B cell (primary cell): ENCODE measurements at regions of chr13 and their contacts with region 1.

Region 1: GRCh38 chr13:41132512-41133152 is at the start of gene KBTBD6:
- DNase-seq: peak; percentile 94
- ATAC-seq: peak; percentile 97
- H3K4me3 ChIP-seq: peak within 1 kb of the TSS; percentile 68 to 99 (median 84)
- H3K4me3 Mint-ChIP-seq: peak within 1 kb of the TSS; percentile 99
- H3K27ac ChIP-seq: peak within 1 kb of the TSS; percentile 45 to 79
- H3K27ac Mint-ChIP-seq: peak within 1 kb of the TSS; percentile 95
- H3K4me1 ChIP-seq: peaks cover 24% of the 10 kb centered on the region in 2 donors
- H3K4me1 Mint-ChIP-seq: peaks cover 43% of the 10 kb centered on the region
- H3K27me3 ChIP-seq: no peaks in the 10 kb centered on the region
- H3K27me3 Mint-ChIP-seq: no peaks in the 10 kb centered on the region
- CTCF ChIP-seq: no peak
- total RNA-seq, gene KBTBD6: 8.5 and 8.8 TPM in 2 replicates

Region 2: GRCh38 chr13:40770934-40771618 is 361.6 kb before region 1 on chr13 and contains the start of gene MRPS31:
- CTCF ChIA-PET with region 1: no interaction called
- POLR2A ChIA-PET with region 1: no interaction called
- intact Hi-C with region 1: loop called (anchors 5 kb)
- DNase-seq: peak; percentile 95
- ATAC-seq: peak; percentile 100
- H3K4me3 ChIP-seq: peak within 1 kb of the TSS; percentile 65 to 99 (median 99)
- H3K4me3 Mint-ChIP-seq: peak within 1 kb of the TSS; percentile 100
- H3K27ac ChIP-seq: peak within 1 kb of the TSS; percentile 64 to 88
- H3K27ac Mint-ChIP-seq: peak within 1 kb of the TSS; percentile 97
- H3K4me1 ChIP-seq: peaks cover 12 to 19% of the 10 kb centered on the region in 2 donors
- H3K4me1 Mint-ChIP-seq: peaks cover 21% of the 10 kb centered on the region
- H3K27me3 ChIP-seq: no peaks in the 10 kb centered on the region
- H3K27me3 Mint-ChIP-seq: no peaks in the 10 kb centered on the region
- CTCF ChIP-seq: no peak
- total RNA-seq, gene MRPS31: 29.7 and 34.4 TPM in 2 replicates

Region 3: GRCh38 chr13:41019011-41019487 is 113.6 kb before region 1 on chr13 and contains the start of gene ELF1:
- CTCF ChIA-PET with region 1: no interaction called
- POLR2A ChIA-PET with region 1: no interaction called
- intact Hi-C with region 1: loop called (anchors 2 kb)
- DNase-seq: peak; percentile 91
- ATAC-seq: peak; percentile 89
- H3K4me3 ChIP-seq: peak within 1 kb of the TSS; percentile 65 to 99 (median 75)
- H3K4me3 Mint-ChIP-seq: peak within 1 kb of the TSS; percentile 94
- H3K27ac ChIP-seq: peak within 1 kb of the TSS; percentile 96 to 100
- H3K27ac Mint-ChIP-seq: peak within 1 kb of the TSS; percentile 98
- H3K4me1 ChIP-seq: peaks cover 29 to 33% of the 10 kb centered on the region in 2 donors
- H3K4me1 Mint-ChIP-seq: peaks cover 52% of the 10 kb centered on the region
- H3K27me3 ChIP-seq: no peaks in the 10 kb centered on the region
- H3K27me3 Mint-ChIP-seq: no peaks in the 10 kb centered on the region
- CTCF ChIP-seq: no peak
- total RNA-seq, gene ELF1: 185 and 186 TPM in 2 replicates

Region 4: DNA sequence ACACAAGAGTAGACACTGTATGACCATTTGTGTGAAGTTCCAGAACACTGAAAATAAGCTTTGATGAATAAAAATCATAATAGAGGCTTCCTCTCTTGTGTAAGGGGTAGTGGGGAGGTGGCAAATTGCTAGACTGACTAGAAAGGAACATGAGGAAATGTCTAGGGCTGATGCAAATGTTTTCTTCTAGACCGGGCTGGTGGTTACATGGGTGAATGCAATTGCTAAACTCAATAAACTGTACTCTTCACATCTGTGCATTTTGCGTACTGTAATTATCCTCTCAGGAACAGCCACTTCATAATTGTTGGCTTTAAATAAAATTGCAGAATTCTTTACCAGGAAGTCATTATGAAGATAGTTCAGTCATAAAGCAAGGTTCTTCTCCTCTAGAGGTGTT is 66.9 kb after region 1 on chr13:
- CTCF ChIA-PET with region 1: interaction called, 3 read pairs
- POLR2A ChIA-PET with region 1: interaction called, 9 read pairs
- intact Hi-C with region 1: loop called (anchors 1 kb)
- DNase-seq: peak; percentile 88
- ATAC-seq: peak; percentile 89
- H3K4me3 ChIP-seq: peak overlapping the region in 2 of 5 experiments; percentile 5 to 47
- H3K4me3 Mint-ChIP-seq: peak overlapping the region; percentile 51
- H3K27ac ChIP-seq: peak overlapping the region; percentile 71 to 100
- H3K27ac Mint-ChIP-seq: peak overlapping the region; percentile 98
- H3K4me1 ChIP-seq: peaks cover 35% of the 10 kb centered on the region in 2 donors
- H3K4me1 Mint-ChIP-seq: peaks cover 42% of the 10 kb centered on the region
- H3K27me3 ChIP-seq: no peaks in the 10 kb centered on the region
- H3K27me3 Mint-ChIP-seq: no peaks in the 10 kb centered on the region
- CTCF ChIP-seq: no peak

Region 5: DNA sequence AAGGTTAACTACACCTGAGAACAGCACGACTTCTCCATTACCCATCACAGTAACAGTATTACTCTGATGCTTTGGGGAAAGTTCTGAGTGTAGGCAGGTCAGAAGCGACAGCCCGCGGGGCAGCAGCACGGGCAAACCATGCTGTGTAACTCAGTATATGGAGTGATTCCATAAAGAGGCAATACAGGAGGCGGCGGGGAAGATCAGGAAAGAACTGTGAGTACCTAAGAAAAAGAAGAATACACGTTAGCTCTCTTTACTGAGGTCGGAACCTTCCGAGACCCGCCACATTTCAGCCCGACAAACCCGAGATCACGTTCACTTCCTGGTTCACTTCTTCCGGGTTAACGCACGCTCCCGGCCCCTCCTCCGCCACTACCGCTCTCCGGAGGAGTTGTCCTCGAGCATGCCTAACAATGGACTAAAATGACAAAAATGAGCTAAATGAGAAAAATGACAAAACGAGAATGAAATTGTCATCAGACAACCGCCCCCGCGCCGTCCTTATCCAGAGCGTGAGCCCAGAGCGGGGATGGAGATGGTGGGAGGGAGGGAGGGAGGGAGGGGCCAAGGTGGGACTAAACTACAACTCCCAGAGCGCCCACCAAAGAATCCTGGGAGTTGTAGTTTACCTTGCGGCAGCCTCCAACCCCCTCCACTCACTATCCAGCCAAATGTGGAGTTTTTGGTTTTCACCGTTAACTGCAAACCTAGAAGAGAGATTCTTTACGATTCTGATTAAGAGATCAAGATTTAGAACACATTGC is 130.8 kb after region 1 on chr13 and contains the start of gene MTRF1:
- CTCF ChIA-PET with region 1: interaction called, 3 read pairs
- POLR2A ChIA-PET with region 1: no interaction called
- intact Hi-C with region 1: loop called (anchors 1 kb)
- DNase-seq: peak; percentile 92
- ATAC-seq: peak; percentile 92
- H3K4me3 ChIP-seq: peak within 1 kb of the TSS; percentile 62 to 95 (median 76)
- H3K4me3 Mint-ChIP-seq: peak within 1 kb of the TSS; percentile 96
- H3K27ac ChIP-seq: peak within 1 kb of the TSS; percentile 79 to 92
- H3K27ac Mint-ChIP-seq: peak within 1 kb of the TSS; percentile 98
- H3K4me1 ChIP-seq: peaks cover 6 to 7% of the 10 kb centered on the region in 2 donors
- H3K4me1 Mint-ChIP-seq: peaks cover 21% of the 10 kb centered on the region
- H3K27me3 ChIP-seq: no peaks in the 10 kb centered on the region
- H3K27me3 Mint-ChIP-seq: no peaks in the 10 kb centered on the region
- CTCF ChIP-seq: no peak
- total RNA-seq, gene MTRF1: 29.8 and 36.0 TPM in 2 replicates

Region 6: DNA sequence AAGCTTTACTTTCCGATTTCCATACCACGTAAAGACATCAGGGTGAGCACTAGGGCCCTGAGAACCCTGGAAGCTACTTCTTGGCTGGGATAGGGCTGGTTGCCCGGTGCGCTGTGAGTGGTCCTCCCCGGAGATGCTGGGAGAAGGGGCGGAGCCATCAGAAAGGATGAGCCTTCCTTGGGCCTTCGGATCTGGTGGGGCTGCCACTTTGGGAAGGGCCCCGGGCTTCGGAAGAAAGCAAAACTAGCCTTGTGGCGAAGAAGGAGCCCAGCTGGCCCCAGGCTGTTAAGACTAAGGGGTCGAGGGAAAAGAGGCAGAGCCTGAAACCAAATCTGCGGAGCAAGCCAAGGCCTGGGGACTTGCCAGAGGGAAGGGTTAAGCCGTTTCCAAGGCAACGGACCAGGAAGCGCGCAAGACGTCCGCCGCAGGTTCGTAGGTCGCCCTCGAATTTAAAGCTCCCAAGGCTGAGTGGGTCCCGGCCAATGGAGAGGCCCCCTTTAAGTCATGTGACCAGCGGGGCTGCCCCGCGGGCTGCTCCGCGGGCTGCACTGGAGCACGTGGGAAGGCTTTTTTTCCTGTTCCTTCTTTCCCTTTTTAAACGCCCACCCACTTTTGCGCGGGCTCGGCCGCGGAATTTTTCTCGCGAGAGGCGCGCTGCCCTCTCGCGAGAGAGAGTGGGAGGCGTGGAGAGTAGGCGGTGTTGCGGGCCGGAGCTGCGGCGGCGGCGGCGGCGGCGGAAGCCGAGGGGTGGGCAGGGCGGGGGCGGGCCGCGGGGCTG is 1138.9 kb after region 1 on chr13:
- CTCF ChIA-PET with region 1: no interaction called
- POLR2A ChIA-PET with region 1: no interaction called
- intact Hi-C with region 1: loop called (anchors 5 kb)
- DNase-seq: peak; percentile 99
- ATAC-seq: peak; percentile 81
- H3K4me3 ChIP-seq: peak overlapping the region; percentile 17 to 78 (median 72)
- H3K4me3 Mint-ChIP-seq: peak overlapping the region; percentile 97
- H3K27ac ChIP-seq: peak overlapping the region; percentile 91 to 96
- H3K27ac Mint-ChIP-seq: peak overlapping the region; percentile 98
- H3K4me1 ChIP-seq: peaks cover 41 to 48% of the 10 kb centered on the region in 2 donors
- H3K4me1 Mint-ChIP-seq: peaks cover 44% of the 10 kb centered on the region
- H3K27me3 ChIP-seq: no peaks in the 10 kb centered on the region
- H3K27me3 Mint-ChIP-seq: no peaks in the 10 kb centered on the region
- CTCF ChIP-seq: no peak